Right ventricle myocardium superior (tissue), 1 donor: ENCODE measurements at regions of chr16 and their contacts with region 1.

Region 1: DNA sequence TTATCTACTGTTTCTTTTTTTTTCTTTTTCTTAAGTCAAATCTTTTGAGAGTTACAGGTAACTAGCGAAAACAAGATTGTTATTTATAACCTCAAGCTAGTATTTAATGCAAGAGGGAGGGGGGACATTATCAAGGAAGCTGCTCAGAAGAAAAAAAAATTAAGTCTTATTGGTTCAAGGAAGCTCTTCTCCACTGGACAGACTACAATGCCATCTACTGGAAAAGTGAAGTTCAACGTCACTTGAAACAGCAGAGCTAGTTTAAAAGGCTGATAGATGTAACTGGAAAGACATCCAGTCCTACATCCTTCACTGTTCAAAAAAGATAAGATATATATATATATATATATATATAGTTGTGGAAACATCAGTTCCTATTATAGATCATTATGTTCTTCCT is 418.0 kb upstream of the PSMD7 start:
- DNase-seq: no peak
- ATAC-seq: no peak

Region 2: GRCh38 chr16:72400257-72400882 is 1478.2 kb before region 1 on chr16:
- intact Hi-C with region 1: loop called (anchors 10 kb)
- DNase-seq: no peak
- ATAC-seq: no peak

Region 3: GRCh38 chr16:72501739-72502593 is 1376.6 kb before region 1 on chr16:
- intact Hi-C with region 1: loop called (anchors 10 kb)
- DNase-seq: peak; percentile 47
- ATAC-seq: peak; percentile 73

Region 4: DNA sequence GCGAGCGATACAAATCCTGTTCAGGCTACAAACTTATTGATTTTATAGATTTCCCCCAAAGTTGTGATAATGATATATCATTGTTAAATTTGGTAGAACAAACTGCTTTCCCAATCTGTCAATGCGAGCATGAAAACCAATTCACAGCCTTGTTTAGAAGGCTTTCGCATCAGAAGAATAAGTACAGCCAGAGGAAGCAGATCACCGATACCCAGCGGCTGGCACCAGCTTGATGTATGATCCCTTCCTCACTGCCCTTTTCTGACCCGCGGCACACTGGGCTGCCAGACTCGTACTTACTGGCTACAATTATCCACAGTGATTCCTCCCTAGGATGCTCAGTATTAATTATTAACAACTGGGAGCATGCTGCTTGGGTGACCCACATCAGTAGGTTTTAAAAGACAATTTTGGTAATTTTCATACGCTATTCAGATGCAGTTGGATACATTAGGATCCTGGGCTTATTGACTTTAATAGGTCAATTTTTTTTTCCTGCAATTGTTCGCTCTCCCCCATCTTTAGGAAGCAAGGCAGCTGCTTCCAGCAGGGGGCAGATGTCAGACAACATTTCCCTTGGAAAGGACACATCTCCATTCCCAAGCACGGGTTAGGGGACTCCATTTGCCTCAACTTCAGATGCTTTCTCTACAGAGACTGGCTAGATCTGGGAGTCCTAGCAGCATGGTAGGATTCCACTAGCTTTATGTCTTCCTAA is 164.7 kb before region 1 on chr16:
- intact Hi-C with region 1: loop called (anchors 10 kb)
- DNase-seq: no peak
- ATAC-seq: no peak